Natural killer cell (primary cell): ENCODE measurements at regions of chr6 and their contacts with region 1.

Region 1: DNA sequence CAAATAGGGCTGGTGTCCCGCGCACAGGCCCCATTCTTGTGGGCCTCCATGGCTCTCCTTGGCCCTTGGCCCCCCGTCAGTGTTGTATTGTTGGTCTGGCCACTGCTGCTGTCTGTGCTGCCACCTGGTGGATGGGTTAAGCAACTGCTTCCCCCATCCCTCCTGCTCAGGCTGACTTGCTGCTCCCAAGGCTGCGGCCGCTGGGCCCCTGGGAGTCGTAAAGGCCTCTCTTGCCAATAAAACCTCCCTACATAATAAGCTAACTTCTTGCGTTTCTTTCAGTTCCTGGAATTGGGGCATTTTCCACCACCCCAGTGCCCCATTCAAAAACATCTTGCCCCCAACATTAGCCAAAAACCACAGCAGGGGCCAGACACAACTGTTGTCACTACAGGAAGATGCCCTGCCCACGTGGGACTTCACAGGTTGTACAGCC is 27.1 kb downstream of the CD83 start:
- DNase-seq: peak; percentile 64 to 86
- ATAC-seq: peak; percentile 79 to 95 (median 86)
- H3K4me3 ChIP-seq: no peak overlapping the region
- H3K4me3 Mint-ChIP-seq: peak overlapping the region; percentile 26
- H3K27ac ChIP-seq: no peak overlapping the region
- H3K27ac Mint-ChIP-seq: peak overlapping the region; percentile 23 to 50
- H3K4me1 ChIP-seq: peaks cover 3% of the 10 kb centered on the region
- H3K4me1 Mint-ChIP-seq: peaks cover 5 to 7% of the 10 kb centered on the region in 2 donors
- H3K27me3 ChIP-seq: no peaks in the 10 kb centered on the region
- H3K27me3 Mint-ChIP-seq: no peaks in the 10 kb centered on the region
- CTCF ChIP-seq: peak; percentile 97

Region 2: DNA sequence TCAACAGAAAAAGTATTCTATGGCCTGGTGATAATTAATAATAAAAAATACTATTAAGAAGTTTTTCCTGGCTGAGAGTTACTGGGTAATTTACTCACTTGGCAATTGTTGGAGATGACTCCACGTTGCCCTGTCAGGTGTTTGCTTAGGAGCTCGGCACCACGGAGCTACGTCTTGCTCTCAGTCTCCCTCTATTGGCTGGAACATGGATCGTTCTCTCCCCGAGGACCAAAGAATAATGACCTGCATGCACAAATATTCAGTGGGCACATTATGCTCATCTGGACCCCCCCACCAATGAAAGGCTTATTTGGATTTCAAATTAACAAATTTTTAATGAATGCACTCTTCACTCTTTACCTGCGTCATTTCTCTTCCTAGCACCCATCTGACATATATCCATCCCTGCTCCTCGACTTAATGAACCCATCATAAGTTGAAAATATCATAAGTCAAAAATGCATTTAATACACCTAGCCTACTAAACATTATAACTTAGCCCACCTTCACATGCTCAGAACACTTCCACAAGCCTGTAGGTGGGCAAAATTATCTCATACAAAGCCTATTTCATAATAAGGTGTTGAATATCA is 98.1 kb before region 1 on chr6:
- intact Hi-C with region 1: loop called (anchors 10 kb)
- DNase-seq: peak in 1 of 2 donors; percentile 74
- ATAC-seq: peak; percentile 67 to 85 (median 75)
- H3K4me3 ChIP-seq: no peak overlapping the region
- H3K4me3 Mint-ChIP-seq: no peak overlapping the region
- H3K27ac ChIP-seq: no peak overlapping the region
- H3K27ac Mint-ChIP-seq: no peak overlapping the region
- H3K4me1 ChIP-seq: no peaks in the 10 kb centered on the region
- H3K4me1 Mint-ChIP-seq: no peaks in the 10 kb centered on the region
- H3K27me3 ChIP-seq: no peaks in the 10 kb centered on the region
- H3K27me3 Mint-ChIP-seq: peaks cover 15 to 27% of the 10 kb centered on the region in 2 donors
- CTCF ChIP-seq: peak; percentile 59